ENCODE measurements at regions of chr20 and their contacts with region 1.

Region 1: GRCh38 chr20:21182832-21183563 is 57.1 kb downstream of the KIZ start:
- DNase-seq: peak in 1 of 2 experiments; percentile 11
- H3K4me3 ChIP-seq: no peak overlapping the region
- H3K4me3 Mint-ChIP-seq: peak overlapping the region; percentile 20
- H3K27ac Mint-ChIP-seq: peak overlapping the region; percentile 34
- H3K4me1 ChIP-seq: peaks cover 19% of the 10 kb centered on the region; the same call in 1 of the 2 replicates
- H3K4me1 Mint-ChIP-seq: peaks cover 17% of the 10 kb centered on the region
- H3K27me3 ChIP-seq: no peaks in the 10 kb centered on the region
- H3K27me3 Mint-ChIP-seq: no peaks in the 10 kb centered on the region
- CTCF ChIP-seq: no peak

Region 2: DNA sequence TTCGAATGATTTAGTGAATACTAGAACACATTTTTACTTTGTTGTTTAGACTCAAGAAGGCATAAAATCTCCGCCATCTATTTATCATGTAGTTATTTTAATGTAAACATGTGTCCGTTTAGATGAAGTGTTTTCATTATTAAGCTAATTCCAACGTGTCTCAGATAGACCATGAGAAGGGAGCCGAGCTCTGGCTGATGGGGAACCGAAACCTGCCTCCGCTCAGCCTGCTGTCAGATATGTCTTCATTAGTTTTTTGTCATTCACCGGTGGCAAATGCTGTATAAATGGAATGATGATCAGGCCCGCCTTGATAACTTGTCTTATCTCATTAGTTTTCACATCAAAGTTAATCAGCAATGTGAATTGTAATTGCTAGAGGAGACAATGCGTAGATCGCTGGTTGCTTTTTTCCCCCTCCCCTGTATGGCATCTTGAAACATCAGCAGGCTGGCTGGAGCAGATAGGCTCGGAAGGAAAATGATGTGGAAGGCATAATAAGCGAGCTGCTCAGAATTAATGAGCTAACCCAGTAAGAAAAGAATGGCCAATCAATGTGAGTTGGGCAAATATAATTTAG is 213.2 kb before region 1 on chr20:
- CTCF ChIA-PET with region 1: no interaction called
- POLR2A ChIA-PET with region 1: no interaction called
- intact Hi-C with region 1: no loop called
- DNase-seq: no peak
- H3K4me3 ChIP-seq: no peak overlapping the region
- H3K4me3 Mint-ChIP-seq: no peak overlapping the region
- H3K27ac Mint-ChIP-seq: no peak overlapping the region
- H3K4me1 ChIP-seq: no peaks in the 10 kb centered on the region
- H3K4me1 Mint-ChIP-seq: no peaks in the 10 kb centered on the region
- H3K27me3 ChIP-seq: no peaks in the 10 kb centered on the region
- H3K27me3 Mint-ChIP-seq: no peaks in the 10 kb centered on the region
- CTCF ChIP-seq: no peak

Region 3: GRCh38 chr20:21125849-21126580 is 57.0 kb before region 1 on chr20 and contains the start of gene KIZ:
- CTCF ChIA-PET with region 1: interaction called, 4 read pairs
- POLR2A ChIA-PET with region 1: no interaction called
- intact Hi-C with region 1: loop called (anchors 10 kb)
- DNase-seq: peak; percentile 97 to 100
- H3K4me3 ChIP-seq: peak within 1 kb of the TSS; percentile 97
- H3K4me3 Mint-ChIP-seq: peak within 1 kb of the TSS; percentile 84
- H3K27ac Mint-ChIP-seq: peak within 1 kb of the TSS; percentile 61
- H3K4me1 ChIP-seq: no peaks in the 10 kb centered on the region
- H3K4me1 Mint-ChIP-seq: peaks cover 9% of the 10 kb centered on the region
- H3K27me3 ChIP-seq: no peaks in the 10 kb centered on the region
- H3K27me3 Mint-ChIP-seq: no peaks in the 10 kb centered on the region
- CTCF ChIP-seq: peak; percentile 10 to 38
- total RNA-seq, gene KIZ: 21.0 and 31.8 TPM in 2 replicates

Measured in Caco-2 (cell line).